ENCODE measurements at regions of chr11 and their contacts with region 1.

Region 1: GRCh38 chr11:12813371-12814225 is 139.4 kb downstream of the TEAD1 start:
- DNase-seq: no peak
- H3K4me3 ChIP-seq: no peak overlapping the region; a peak in 1 of 4 replicates
- H3K27ac ChIP-seq: peak overlapping the region; percentile 86 to 96
- H3K4me1 ChIP-seq: peaks cover 62 to 87% of the 10 kb centered on the region in 2 experiments
- H3K27me3 ChIP-seq: no peaks in the 10 kb centered on the region
- CTCF ChIP-seq: no peak
- EP300 ChIP-seq: no peak
- RAD21 ChIP-seq: no peak

Region 2: DNA sequence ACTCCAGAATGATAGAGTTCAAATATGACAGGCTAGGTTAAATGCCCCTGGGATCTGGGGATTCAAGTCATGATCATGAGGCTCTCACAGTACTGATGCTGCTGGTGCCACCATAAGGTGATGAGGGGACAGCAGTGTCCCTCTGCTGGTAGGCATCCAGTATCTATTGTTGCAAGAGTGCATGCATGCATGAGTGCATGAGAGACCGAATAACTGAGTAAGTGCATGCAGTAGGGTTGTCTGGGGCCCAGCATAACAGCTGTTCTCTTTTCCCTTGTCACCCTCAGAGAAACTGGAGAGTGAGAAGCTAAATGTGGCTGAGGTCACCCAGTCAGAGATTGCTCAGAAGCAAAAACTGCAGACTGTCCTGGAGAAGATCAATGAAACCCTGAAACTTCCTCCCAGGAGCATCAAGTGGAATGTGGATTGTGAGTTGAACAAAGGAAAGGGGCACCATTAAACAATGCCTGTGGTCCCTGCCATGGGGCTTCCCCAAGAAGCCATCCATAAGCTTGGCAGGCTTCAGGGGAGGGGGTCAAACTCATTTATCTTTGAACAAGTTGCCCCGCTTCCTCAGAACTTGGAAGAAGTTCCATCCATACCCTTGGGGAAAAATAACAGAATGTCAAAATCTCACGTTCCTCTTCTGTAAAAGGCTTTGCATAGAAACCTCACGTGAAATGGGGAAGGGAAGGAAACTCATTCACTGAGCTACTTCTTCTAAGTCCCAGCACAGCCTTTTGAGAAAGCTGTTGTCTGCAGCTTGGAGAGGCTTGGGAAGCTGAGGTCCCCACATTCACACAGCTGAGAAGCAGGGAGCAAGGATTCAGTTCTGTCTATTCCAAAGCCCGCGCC is 317.2 kb before region 1 on chr11:
- CTCF ChIA-PET with region 1: no interaction called
- POLR2A ChIA-PET with region 1: no interaction called
- DNase-seq: no peak
- H3K4me3 ChIP-seq: no peak overlapping the region
- H3K27ac ChIP-seq: no peak overlapping the region
- H3K4me1 ChIP-seq: peaks cover 0 to 2% of the 10 kb centered on the region in 2 experiments; a peak in 1 of 4 replicates
- H3K27me3 ChIP-seq: no peaks in the 10 kb centered on the region
- CTCF ChIP-seq: peak; percentile 29
- EP300 ChIP-seq: no peak
- RAD21 ChIP-seq: no peak

Region 3: DNA sequence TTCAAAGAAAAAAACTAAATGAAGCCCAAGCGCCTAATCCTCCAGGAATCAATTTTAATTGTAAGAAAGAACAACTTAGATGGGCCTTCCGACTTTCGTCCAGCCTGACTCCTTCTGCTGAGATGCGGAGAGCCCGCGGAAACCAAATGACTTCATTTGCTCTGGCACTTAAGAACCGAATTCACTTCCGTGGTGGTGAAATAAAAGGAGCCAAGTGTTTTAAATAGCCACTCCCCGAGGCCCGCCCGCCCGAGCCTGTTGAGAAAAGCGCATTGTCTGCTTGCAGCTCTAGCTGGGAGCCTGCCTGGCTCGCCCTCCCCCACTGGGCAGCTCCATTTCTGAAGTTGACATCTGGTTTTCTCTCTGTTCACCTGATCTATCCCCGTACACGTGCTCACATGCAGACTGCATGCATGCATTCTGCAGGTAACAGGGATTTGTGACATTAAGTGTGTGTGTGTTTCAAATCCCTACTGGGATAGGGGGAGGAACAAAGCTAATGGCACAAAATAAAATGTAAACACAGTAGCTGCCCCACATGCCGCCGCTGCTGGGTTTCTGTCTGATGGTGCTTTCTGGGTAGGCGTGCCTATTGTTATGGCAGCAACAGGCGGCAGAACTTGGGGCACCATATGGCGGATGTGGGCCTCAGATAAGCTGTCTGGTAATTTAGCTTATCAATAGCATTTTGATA is 133.2 kb before region 1 on chr11:
- CTCF ChIA-PET with region 1: interaction called, 21 read pairs
- POLR2A ChIA-PET with region 1: interaction called, 7 read pairs
- DNase-seq: peak; percentile 75
- H3K4me3 ChIP-seq: peak overlapping the region; percentile 25 to 73
- H3K27ac ChIP-seq: peak overlapping the region; percentile 90 to 95
- H3K4me1 ChIP-seq: peaks cover 57 to 60% of the 10 kb centered on the region in 2 experiments
- H3K27me3 ChIP-seq: no peaks in the 10 kb centered on the region
- CTCF ChIP-seq: no peak
- EP300 ChIP-seq: peak; percentile 53 to 81; a peak in 3 of 4 replicates
- RAD21 ChIP-seq: no peak

Region 4: DNA sequence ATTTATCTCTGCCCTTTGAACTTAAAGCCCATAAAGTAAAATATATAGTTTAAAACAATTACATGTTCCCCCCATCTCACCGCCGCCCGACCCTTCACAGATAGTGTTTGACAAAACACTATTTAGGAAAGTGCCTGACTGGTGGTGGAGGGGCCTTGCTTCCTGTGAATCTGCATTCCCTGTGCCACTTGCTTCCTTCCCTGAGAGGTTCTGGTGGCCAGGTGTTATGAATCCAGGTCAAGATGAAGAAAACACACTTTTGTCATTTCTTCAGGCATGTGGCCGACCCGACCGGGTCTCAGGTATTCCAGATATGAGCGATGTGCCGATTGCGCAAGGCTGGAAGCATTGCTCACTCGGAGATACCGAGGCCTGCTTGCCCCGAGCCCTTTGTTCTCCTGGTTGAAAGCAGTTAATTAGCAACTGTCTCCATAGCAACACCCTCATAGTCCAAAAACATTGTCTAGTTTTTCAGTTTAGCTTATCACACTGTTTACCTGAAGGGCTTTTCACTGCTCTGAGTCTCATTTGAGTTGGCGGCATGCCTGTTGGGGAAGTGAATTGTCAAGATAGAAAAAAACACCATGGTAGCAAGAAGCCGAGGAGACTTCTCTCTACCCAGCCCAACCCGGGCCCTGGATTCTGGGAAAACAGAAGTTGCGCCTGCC is 11.0 kb before region 1 on chr11:
- CTCF ChIA-PET with region 1: interaction called, 10 read pairs
- POLR2A ChIA-PET with region 1: interaction called, 13 read pairs
- DNase-seq: no peak
- H3K4me3 ChIP-seq: peak overlapping the region in 1 of 2 experiments; percentile 1; a peak in 1 of 4 replicates
- H3K27ac ChIP-seq: peak overlapping the region; percentile 78 to 95
- H3K4me1 ChIP-seq: peaks cover 56 to 82% of the 10 kb centered on the region in 2 experiments
- H3K27me3 ChIP-seq: no peaks in the 10 kb centered on the region
- CTCF ChIP-seq: no peak
- EP300 ChIP-seq: no peak
- RAD21 ChIP-seq: no peak

Region 5: DNA sequence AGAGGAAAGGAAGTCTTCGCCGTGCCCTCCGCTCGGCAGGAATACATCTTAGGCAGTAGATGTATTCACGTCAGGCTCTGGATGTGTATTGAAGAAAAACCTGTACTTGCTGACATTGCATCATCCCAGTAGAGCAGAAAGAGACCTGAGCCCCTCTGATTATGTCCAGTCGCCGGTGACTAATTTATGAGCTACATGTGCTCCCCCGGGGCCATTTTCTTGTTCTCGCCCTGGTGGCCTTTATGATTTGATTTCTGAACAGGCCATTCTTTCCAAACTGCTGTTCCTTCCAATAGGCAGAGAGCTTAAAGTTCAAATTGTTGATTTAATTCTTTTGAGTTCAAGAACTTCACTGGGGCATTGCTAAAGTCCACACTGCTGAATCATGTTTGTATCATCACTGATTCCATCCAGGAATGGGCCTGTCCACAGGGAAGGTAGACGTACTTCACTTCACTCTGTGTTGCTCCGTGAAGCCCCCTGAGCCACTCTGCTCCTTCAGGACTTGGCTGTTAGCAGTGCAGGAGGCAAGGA is 58.3 kb after region 1 on chr11:
- CTCF ChIA-PET with region 1: no interaction called
- POLR2A ChIA-PET with region 1: no interaction called
- DNase-seq: no peak
- H3K4me3 ChIP-seq: no peak overlapping the region
- H3K27ac ChIP-seq: peak overlapping the region; percentile 8 to 39; a peak in 2 of 4 replicates
- H3K4me1 ChIP-seq: peaks cover 24 to 30% of the 10 kb centered on the region in 2 experiments; a peak in 3 of 4 replicates
- H3K27me3 ChIP-seq: no peaks in the 10 kb centered on the region
- CTCF ChIP-seq: no peak
- EP300 ChIP-seq: no peak
- RAD21 ChIP-seq: no peak

Region 6: GRCh38 chr11:12893787-12894672 is 80.4 kb after region 1 on chr11:
- CTCF ChIA-PET with region 1: interaction called, 42 read pairs
- POLR2A ChIA-PET with region 1: interaction called, 4 read pairs
- DNase-seq: peak; percentile 62
- H3K4me3 ChIP-seq: no peak overlapping the region; a peak in 1 of 4 replicates
- H3K27ac ChIP-seq: peak overlapping the region; percentile 55 to 58
- H3K4me1 ChIP-seq: peaks cover 15 to 33% of the 10 kb centered on the region in 2 experiments; a peak in 3 of 4 replicates
- H3K27me3 ChIP-seq: no peaks in the 10 kb centered on the region
- CTCF ChIP-seq: peak; percentile 94
- EP300 ChIP-seq: peak in 1 of 2 experiments; percentile 51; a peak in 1 of 4 replicates
- RAD21 ChIP-seq: peak; percentile 89

Measured in SK-N-SH (cell line).